ENCODE measurements at regions of chr22 and their contacts with region 1.

Region 1: DNA sequence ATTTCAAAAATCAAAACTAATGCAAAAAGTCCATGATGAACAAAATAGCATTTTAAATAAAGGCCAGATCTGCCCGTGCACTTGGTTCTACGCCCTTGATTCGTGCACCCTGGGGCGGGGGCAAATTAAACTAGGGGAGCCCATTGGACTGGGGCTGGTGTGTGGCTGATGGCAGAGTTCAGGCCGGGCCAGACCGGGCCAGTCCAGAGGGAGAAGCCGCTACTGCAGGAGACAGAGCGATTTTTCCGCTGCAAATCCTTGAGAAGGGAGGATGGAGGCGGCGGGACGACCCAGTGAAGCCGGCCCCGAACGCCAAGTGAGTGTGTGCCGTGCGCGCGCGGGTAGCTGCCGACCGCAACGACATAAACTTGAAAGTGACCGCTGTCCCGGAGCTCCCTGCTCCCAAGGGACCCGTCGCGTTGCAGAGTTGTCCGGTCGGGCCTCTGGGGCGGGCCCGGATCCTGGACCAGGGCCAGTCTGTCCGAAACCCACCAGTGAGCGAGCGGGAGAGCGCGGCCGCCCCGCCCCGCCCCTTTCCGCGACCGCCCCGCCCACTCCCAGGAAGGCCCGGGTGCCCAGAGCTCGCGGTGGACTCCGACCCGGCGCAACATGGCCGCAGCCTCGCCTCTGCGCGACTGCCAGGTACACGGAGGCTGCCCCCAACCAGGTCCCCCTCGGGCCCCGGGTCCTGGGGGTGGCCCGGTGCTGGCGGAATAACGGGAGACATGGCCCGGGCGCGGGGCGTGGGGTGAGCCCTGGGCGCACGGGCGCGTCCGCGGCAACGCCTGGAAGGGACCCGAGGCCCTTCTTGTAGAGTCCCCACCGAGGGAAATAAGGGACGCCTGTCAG is at the start of gene TTC38:
- DNase-seq: peak; percentile 95

Region 2: DNA sequence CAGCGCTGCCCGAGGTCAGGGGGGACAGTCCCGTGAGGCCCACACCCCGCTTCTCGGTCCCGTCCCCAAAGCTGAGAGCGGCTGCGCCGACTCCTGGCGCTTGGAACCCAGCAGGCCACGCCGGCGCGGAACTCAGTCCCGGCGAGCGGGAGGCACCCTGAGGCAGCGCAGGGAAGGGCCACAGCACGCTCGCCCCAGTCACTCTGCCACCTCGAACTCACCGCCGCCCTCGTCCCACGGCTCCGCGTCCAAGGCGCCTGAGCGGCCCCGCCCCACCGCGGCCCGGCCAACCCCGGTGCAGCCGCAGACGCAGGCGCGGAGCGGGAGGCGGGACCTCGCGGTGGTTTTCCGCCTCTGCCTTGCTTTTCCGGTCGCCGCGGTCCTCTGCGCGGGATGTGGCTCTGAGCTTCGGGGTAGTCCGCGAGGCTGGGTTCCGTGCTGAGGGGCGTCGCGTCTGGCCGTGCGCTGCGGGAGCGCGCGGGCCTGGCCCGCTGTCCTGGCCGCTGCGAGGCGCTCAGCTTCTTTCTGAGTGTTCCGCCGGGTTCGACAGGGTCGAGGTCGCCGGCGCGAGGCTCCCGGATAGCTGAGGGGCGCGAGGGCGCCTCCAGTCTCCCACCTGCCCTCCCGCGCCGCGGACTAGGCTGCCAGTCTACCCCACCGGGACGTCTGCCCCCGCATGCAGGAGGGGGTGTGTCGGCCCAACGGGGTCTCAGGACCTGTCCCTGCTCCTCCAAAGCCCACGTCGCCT is 17.4 kb before region 1 on chr22 and contains the start of gene CDPF1:
- CTCF ChIA-PET with region 1: no interaction called
- POLR2A ChIA-PET with region 1: interaction called, 10 read pairs
- DNase-seq: peak; percentile 87

Region 3: GRCh38 chr22:46280999-46281623 is 13.5 kb after region 1 on chr22:
- CTCF ChIA-PET with region 1: no interaction called
- POLR2A ChIA-PET with region 1: interaction called, 28 read pairs
- DNase-seq: no peak

Region 4: DNA sequence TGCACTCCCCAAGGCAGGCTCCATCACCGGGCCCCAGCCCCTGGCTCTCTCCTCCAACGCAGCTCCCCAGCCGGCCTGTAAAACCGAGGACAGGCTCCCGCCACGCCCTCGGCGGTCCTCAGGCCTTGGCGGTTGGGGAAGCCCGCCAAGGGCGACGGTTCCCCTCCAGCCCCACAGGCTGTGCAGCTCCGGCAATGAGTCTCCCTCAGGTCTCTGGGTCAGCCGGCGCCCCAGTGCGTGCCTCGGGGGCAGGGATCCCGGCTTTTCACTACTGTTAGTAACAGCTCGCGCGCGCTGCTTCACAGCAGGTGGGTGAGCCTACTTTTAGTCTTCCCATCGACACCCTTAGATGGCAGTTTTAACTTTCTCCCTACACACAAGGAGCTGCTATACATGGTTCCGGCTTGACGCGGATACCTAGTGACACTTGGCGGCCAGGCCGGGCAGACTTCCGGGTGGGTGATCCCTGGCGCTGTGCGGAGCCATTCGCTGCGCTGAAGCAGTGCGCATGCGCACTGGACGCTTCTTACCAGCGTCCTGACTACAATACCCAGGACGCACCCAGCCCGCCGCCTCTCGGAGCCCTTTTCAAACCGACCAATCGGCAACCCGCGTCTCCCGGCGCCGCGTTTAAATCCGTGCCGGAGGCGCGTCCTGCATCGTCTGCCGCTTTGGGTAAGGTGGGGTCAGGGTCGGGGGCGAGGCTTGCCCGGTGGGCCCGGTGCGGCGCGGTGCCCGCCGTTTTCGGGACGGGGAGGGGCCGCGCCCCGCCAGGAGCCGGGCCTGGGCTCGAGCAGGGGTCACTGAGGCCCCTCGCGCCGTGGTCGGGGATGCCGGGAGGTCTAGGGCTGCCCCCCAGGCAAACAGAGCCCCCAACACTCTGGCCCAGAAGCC is 28.8 kb after region 1 on chr22 and contains the start of gene GTSE1:
- CTCF ChIA-PET with region 1: no interaction called
- POLR2A ChIA-PET with region 1: interaction called, 11 read pairs
- DNase-seq: peak; percentile 99